SK-N-SH (cell line): ENCODE measurements at regions of chr2 and their contacts with region 1.

Region 1: DNA sequence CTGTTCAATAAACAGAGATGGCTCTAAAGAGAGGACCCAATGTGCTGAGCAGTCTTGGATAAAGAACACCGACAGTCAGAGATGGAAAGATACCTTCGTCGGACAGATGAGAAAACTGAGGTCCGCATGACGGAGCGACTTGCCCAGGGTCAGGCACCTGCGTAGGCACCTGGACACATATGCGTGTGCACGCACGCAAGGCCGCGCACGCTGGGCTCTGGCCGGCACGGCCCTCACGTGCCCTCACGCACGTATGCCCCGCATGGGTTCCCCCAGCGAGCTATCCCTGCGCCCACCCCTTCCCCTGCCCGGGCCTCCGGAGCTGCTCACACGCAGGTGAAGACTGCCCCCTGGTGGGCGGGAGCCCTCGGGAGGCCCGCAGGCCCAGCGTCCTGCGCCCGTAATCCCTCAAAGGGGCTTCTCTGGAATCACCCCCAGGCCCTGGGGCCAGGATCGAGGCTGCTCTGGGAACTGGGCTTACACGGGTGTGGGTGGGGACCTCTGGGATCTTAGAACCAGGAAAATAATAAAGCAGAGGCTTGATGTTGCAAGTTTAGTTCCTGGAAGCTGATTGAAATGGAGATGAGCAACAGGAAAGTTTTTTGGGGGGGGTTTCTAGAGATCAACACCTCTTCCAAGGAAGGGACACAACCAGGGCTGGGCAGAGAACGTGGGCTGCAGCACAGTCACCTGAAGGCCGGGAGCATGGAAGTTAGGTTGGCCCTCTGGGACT is 246.3 kb downstream of the TNS1 start:
- DNase-seq: peak; percentile 93
- H3K4me3 ChIP-seq: no peak overlapping the region
- H3K27ac ChIP-seq: no peak overlapping the region
- H3K4me1 ChIP-seq: peaks cover 5 to 6% of the 10 kb centered on the region in 2 experiments; a peak in 2 of 4 replicates
- H3K27me3 ChIP-seq: no peaks in the 10 kb centered on the region
- CTCF ChIP-seq: peak; percentile 82
- EP300 ChIP-seq: no peak
- RAD21 ChIP-seq: peak; percentile 79

Region 2: DNA sequence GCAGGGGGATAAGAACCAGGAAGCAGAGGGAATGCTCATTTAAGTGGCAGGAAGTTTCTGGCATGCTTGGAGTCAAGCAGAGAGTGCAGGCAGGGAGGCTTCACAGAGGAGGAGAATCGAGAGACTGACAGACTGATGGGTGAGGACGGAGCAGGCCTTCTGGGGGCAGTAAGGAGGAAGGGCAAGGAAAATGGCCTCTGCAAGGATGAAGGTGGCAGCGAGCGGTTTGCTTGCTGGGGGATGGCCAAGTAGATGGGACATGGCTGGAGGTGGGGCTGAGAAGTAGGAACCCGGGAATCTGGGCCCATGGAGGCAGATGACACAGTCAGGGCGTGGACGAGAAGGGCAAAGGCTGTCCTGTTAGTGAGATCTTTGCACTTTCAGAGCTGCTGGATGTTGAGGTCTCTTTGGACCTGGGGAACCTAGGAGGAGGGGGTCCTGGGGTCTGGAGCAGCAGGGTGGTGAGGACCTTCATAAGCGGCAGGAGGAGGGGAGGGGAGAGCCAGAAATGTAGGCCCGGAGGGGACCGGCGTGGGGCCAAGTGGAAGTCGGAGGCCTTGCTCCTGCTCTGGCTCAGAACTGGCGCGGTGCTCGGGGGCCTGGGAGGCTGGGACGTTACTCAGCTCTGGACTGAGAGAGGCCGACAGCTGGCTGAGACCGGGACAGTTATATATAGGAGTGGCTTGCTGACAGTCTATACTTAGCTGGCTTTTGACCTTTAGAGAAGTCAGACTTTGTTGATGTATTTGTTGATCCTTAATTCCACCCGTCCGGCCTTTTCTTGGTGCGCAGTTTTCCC is 1077.1 kb before region 1 on chr2:
- CTCF ChIA-PET with region 1: interaction called, 14 read pairs
- POLR2A ChIA-PET with region 1: no interaction called
- DNase-seq: no peak
- H3K4me3 ChIP-seq: no peak overlapping the region
- H3K27ac ChIP-seq: no peak overlapping the region
- H3K4me1 ChIP-seq: peaks cover 6 to 8% of the 10 kb centered on the region in 2 experiments; a peak in 2 of 4 replicates
- H3K27me3 ChIP-seq: no peaks in the 10 kb centered on the region
- CTCF ChIP-seq: no peak
- EP300 ChIP-seq: no peak
- RAD21 ChIP-seq: no peak

Region 3: GRCh38 chr2:217223222-217223930 is 533.2 kb before region 1 on chr2:
- CTCF ChIA-PET with region 1: no interaction called
- POLR2A ChIA-PET with region 1: no interaction called
- DNase-seq: no peak
- H3K4me3 ChIP-seq: no peak overlapping the region
- H3K27ac ChIP-seq: peak overlapping the region in 1 of 2 experiments; percentile 72; a peak in 3 of 4 replicates
- H3K4me1 ChIP-seq: peaks cover 0 to 23% of the 10 kb centered on the region in 2 experiments; a peak in 3 of 4 replicates
- H3K27me3 ChIP-seq: no peaks in the 10 kb centered on the region
- CTCF ChIP-seq: no peak
- EP300 ChIP-seq: peak in 1 of 2 experiments; percentile 51; a peak in 1 of 4 replicates
- RAD21 ChIP-seq: no peak

Region 4: GRCh38 chr2:217722883-217723472 is 33.6 kb before region 1 on chr2:
- CTCF ChIA-PET with region 1: interaction called, 12 read pairs
- POLR2A ChIA-PET with region 1: no interaction called
- DNase-seq: peak; percentile 27
- H3K4me3 ChIP-seq: no peak overlapping the region
- H3K27ac ChIP-seq: peak overlapping the region; percentile 47 to 53; a peak in 3 of 4 replicates
- H3K4me1 ChIP-seq: peaks cover 0 to 5% of the 10 kb centered on the region in 2 experiments; a peak in 1 of 4 replicates
- H3K27me3 ChIP-seq: no peaks in the 10 kb centered on the region
- CTCF ChIP-seq: no peak
- EP300 ChIP-seq: 0 out of 4 replicates have a peak, but pooled peaks of 1 of the 2 experiments have one; percentile 6
- RAD21 ChIP-seq: no peak

Region 5: GRCh38 chr2:217775920-217776492 is 19.5 kb after region 1 on chr2:
- CTCF ChIA-PET with region 1: interaction called, 14 read pairs
- POLR2A ChIA-PET with region 1: no interaction called
- DNase-seq: no peak
- H3K4me3 ChIP-seq: no peak overlapping the region
- H3K27ac ChIP-seq: no peak overlapping the region
- H3K4me1 ChIP-seq: no peaks in the 10 kb centered on the region; a peak in 1 of 4 replicates
- H3K27me3 ChIP-seq: no peaks in the 10 kb centered on the region
- CTCF ChIP-seq: no peak
- EP300 ChIP-seq: no peak
- RAD21 ChIP-seq: no peak

Region 6: DNA sequence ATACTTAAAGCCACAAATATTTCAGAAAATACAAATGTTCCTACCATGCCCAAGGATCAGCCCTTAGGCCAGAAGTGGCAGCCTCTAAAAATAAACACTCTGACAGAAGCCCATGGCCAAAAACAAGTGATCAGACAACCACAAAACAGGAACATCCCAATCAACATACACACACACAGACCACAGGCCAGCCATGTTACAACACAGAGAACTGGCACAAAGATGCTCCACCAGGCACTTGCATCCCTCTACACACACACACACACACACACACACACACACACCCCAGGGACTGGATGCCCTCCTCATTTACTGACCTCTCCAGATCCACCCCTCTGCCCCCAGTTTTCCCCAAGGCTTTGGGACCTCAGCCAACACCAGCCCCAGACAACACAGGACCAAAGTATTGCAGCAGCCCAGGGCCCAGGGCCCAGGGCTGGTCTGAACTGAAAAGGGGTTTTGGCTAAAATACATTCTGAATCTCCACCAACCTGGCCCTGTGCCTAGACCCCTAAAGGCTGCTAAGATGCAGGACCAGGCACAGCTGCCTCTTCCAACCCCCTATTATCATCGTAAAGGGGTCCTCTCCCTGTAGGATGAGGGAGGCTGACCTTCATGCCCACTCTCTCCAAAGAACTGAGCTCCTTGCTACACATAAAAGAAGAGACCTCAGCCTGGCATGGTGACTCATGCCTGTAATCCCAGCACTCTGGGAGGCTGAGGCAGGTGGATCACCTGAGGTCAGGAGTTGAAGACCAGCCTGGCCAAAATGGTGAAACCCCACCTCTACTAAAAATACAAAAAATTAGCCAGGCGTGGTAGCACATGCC is 94.9 kb after region 1 on chr2:
- CTCF ChIA-PET with region 1: no interaction called
- POLR2A ChIA-PET with region 1: no interaction called
- DNase-seq: peak; percentile 69
- H3K4me3 ChIP-seq: no peak overlapping the region
- H3K27ac ChIP-seq: peak overlapping the region in 1 of 2 experiments; percentile 63; a peak in 2 of 4 replicates
- H3K4me1 ChIP-seq: peaks cover 31 to 46% of the 10 kb centered on the region in 2 experiments; a peak in 3 of 4 replicates
- H3K27me3 ChIP-seq: no peaks in the 10 kb centered on the region
- CTCF ChIP-seq: no peak
- EP300 ChIP-seq: no peak; a peak in 1 of 4 replicates
- RAD21 ChIP-seq: no peak

Region 7: GRCh38 chr2:217964275-217965161 is 208.0 kb after region 1 on chr2:
- CTCF ChIA-PET with region 1: no interaction called
- POLR2A ChIA-PET with region 1: no interaction called
- DNase-seq: peak; percentile 51
- H3K4me3 ChIP-seq: no peak overlapping the region
- H3K27ac ChIP-seq: peak overlapping the region in 1 of 2 experiments; percentile 11; a peak in 1 of 4 replicates
- H3K4me1 ChIP-seq: peaks cover 12 to 36% of the 10 kb centered on the region in 2 experiments; a peak in 2 of 4 replicates
- H3K27me3 ChIP-seq: no peaks in the 10 kb centered on the region
- CTCF ChIP-seq: no peak
- EP300 ChIP-seq: no peak
- RAD21 ChIP-seq: no peak